ENCODE measurements at regions of chr12 and their contacts with region 1.

Region 1: DNA sequence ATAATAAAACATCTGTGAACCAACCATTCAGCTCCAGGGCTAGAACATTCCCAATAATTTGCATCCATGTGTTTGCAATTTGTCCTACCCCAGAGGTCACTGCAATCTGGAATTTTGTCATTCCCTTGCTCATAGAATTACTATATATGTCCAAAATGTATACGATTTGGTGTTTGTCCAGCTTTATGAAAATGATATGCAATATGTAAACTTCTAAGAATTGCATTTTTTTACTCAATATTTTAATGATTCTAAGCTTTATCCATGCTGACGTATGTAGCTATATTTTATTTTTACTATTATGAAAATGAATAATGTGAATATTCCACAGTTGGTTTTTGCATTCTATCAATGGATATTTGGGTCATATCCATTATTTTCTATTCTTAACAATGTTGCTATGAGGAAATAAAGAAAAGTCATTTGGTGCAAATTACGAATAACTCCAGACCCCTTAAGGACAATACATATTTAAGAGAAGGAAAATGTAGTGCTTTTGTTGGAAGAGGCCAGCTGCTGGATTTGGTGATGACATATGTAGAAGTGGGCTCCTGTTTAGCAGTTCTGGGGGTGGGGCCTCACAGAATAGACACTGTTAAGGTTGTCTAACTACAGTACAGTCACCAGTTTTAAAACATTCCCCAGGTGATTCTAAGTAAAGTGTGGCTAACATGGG is 139.4 kb downstream of the SLC38A4 start:
- DNase-seq: no peak
- CTCF ChIP-seq: no peak

Region 2: DNA sequence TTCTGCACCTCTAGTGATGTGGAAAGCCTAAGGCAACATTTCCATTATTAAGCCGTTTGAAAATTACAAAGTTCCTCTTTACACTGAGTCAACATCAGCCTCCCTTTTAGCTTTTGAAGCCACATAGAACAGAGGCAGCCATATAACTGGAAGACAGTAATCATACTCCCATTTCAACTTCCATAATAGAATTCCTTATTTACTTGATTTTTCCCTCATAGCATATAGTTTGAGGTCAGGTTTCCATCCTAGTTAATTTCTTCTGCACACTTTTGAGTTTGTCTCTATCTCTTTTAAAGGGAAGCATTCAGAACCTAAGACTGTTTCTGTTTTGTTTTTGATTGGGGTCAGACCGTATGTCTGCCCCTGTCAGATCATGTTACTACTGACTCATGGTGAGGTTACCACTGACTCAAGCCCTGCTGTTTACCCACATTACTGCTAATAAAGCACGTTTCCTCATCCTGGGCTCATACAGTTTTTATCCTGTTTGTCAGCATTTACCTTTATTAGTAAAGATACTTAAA is 21.6 kb before region 1 on chr12:
- CTCF ChIA-PET with region 1: no interaction called
- POLR2A ChIA-PET with region 1: no interaction called
- DNase-seq: peak; percentile 29
- CTCF ChIP-seq: no peak

Region 3: DNA sequence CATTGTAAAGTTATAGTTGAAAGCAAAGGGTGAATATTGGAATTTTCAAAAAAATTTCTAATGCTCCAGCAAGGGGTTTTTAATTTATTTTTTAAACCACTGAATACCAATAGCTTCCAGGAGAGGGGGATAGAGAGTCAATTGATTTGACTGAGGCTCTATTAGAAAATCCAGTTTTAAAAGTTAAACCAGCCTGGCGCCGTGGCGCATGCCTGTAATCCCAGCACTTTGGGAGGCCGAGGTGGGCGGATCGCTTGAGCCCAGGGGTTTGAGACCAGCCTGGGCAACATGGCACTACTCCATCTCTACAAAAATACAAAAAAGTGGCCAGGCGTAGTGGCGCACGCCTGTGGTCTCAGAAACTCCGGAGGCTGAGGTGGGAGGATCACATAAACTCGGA is 10.7 kb before region 1 on chr12:
- CTCF ChIA-PET with region 1: interaction called, 13 read pairs
- POLR2A ChIA-PET with region 1: no interaction called
- DNase-seq: peak; percentile 15
- CTCF ChIP-seq: peak; percentile 36

Region 4: DNA sequence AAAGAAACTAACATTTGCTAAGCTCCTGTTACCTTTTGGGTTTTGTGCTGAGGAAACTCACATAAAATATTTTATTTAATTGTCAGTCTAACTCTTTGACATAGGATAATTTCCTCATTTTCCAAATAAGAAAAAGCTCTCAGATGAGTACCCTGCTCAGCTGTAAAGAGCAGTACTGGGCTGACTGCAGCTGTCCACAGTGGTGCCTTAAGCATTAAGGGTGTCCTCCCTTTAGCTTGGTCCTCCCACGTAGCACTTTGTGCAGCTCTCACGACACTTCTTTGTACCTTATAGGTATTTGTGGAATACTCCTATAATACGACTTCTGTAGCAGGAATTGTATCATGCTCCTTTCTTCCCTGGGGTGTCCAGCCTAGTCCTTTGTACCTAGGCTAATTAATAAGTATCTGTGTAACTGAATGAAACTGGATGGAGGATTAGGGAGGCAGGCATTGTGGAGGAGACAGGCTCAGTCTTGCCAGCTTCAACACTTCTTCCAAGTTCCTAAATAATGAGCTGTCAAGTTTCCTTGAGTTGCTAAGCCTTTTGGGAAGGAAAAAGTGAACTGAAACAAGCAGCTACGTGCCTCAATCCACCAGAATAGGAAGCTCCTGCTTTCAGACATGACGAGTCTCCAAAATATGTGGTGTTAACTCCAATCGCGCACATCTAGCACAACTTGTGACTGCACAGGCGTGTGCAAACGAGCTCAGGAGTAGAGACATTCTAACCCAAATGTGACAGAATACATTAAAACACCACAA is 16.4 kb after region 1 on chr12:
- CTCF ChIA-PET with region 1: no interaction called
- POLR2A ChIA-PET with region 1: no interaction called
- DNase-seq: no peak
- CTCF ChIP-seq: no peak

Measured in GM10248 (cell line).